Naive thymus-derived CD8-positive, alpha-beta T cell (primary cell): ENCODE measurements at regions of chr11 and their contacts with region 1.

Region 1: GRCh38 chr11:128624269-128625175 is 37.2 kb upstream of the ETS1 start:
- DNase-seq: peak; percentile 32 to 86 (median 61)
- ATAC-seq: peak; percentile 58 to 67
- H3K4me3 Mint-ChIP-seq: peak overlapping the region; percentile 52 to 85 (median 82)
- H3K27ac Mint-ChIP-seq: peak overlapping the region; percentile 93 to 99 (median 98)
- H3K4me1 Mint-ChIP-seq: peaks cover 66 to 99% (median 98%) of the 10 kb centered on the region in 4 donors
- H3K27me3 Mint-ChIP-seq: no peaks in the 10 kb centered on the region

Region 2: GRCh38 chr11:128472128-128473089 is 152.1 kb before region 1 on chr11:
- POLR2A ChIA-PET with region 1: interaction called, 45 read pairs
- DNase-seq: peak in 6 of 10 donors; percentile 26 to 56 (median 50)
- ATAC-seq: peak; percentile 2 to 33
- H3K4me3 Mint-ChIP-seq: peak overlapping the region; percentile 75 to 93 (median 88)
- H3K27ac Mint-ChIP-seq: peak overlapping the region; percentile 93 to 99 (median 98)
- H3K4me1 Mint-ChIP-seq: peaks cover 67 to 100% (median 96%) of the 10 kb centered on the region in 4 donors
- H3K27me3 Mint-ChIP-seq: no peaks in the 10 kb centered on the region

Region 3: DNA sequence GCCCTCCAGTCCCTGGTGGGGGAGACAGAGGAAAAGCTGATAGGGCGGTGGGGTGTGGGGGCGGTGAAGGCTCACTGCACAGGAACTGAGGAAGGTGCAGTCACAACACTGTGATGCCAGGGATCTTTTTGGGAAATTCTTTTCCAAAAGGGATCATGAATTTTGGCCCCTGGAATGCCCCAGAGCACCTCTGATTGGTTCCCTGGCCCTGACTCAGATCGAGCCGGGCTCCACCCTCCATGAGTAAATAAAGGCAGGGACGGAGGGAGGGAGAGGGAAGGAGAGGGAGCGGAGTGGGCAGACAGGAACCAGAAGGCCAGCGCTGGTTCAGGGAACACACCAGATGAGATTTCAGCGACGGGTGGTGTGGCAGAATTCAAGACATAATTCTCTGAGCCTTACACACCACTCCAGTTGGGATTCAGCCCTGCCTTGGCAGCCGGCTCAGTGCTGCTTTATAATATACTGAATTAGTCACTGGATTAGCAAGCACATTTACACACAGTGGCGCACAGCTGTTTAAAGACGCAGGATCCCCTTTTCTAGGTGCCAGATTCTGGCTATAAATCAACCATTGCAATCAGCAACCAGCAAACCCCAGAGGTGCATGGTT is 117.4 kb before region 1 on chr11:
- POLR2A ChIA-PET with region 1: interaction called, 69 read pairs
- DNase-seq: peak in 1 of 10 donors; percentile 64
- ATAC-seq: peak; percentile 5 to 11
- H3K4me3 Mint-ChIP-seq: peak overlapping the region; percentile 87 to 99 (median 98)
- H3K27ac Mint-ChIP-seq: peak overlapping the region; percentile 93 to 99 (median 96)
- H3K4me1 Mint-ChIP-seq: peaks cover 57 to 100% (median 96%) of the 10 kb centered on the region in 4 donors
- H3K27me3 Mint-ChIP-seq: no peaks in the 10 kb centered on the region

Region 4: DNA sequence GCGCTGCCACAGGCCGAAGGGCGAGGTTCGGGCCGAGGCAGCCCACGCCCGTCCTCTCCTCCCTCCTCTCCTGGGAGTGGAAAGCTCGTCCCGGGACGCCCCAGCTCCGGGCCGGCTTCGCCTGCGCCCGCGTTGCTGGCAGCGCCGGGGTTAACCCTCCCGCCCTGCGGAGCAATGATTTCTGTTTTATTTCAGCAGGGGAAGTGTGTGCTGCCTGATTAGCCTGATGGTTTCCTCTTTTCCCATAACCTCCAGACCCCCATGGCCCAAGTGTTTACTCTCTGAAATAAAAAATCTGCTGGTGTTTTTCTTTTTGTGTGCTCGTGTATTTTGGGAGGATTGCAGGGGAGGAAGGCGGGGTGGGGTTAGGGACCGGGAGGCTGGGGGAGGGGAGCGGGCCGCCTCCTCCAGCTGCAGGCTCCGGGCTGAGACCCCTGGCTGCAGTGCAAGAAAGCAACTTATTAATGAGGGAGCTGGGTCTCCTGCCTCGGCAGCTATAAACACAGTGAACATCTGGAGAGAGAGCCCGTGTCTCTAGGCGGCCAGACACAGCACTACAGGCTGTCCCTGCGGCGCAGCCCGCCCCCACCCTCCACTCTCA is 75.8 kb before region 1 on chr11:
- POLR2A ChIA-PET with region 1: interaction called, 53 read pairs
- DNase-seq: peak in 5 of 10 donors; percentile 14 to 49 (median 40)
- ATAC-seq: peak; percentile 26 to 32
- H3K4me3 Mint-ChIP-seq: peak overlapping the region; percentile 81 to 93 (median 88)
- H3K27ac Mint-ChIP-seq: peak overlapping the region; percentile 92 to 100 (median 95)
- H3K4me1 Mint-ChIP-seq: peaks cover 57 to 95% (median 92%) of the 10 kb centered on the region in 4 donors
- H3K27me3 Mint-ChIP-seq: no peaks in the 10 kb centered on the region

Region 5: DNA sequence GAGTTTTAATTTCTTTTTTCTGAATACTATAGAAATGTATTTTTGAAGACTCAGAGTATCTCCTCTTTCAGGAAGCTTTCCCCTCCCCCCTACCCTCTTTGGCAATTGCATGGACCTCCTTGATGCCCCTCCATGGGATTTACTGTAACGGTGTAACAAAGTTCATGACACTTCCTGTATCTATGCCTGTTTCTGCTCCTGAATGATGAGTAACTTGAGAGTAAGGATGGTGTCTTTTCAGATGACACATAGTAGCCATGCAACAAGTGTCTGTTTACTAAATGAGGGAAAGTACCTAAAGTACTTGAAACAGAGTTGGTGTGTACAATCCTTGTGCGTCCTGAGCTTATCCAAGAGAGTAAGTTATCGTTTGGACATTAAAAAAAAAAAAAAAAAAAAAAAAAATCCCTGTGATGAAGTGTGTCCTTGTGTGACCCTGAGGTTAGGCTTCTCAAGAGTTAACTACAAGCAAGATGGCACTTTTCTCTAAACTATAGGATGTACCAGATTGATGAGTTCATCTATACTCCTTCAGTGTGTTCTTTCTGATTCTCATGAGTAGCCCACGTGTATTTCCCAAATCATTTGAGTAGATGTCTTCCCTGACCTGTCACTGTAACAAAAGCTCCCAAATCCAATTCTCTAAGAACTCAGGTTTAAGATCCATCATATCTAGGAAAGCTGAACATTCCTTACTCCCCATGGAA is 44.6 kb before region 1 on chr11:
- POLR2A ChIA-PET with region 1: interaction called, 10 read pairs
- DNase-seq: no peak
- ATAC-seq: peak; percentile 40 to 61
- H3K4me3 Mint-ChIP-seq: peak overlapping the region in 3 of 10 donors; percentile 1 to 37 (median 5)
- H3K27ac Mint-ChIP-seq: peak overlapping the region in 4 of 10 donors; percentile 1 to 80 (median 5)
- H3K4me1 Mint-ChIP-seq: peaks cover 31 to 72% (median 68%) of the 10 kb centered on the region in 4 donors
- H3K27me3 Mint-ChIP-seq: no peaks in the 10 kb centered on the region

Region 6: GRCh38 chr11:128603752-128604414 is 20.6 kb before region 1 on chr11:
- POLR2A ChIA-PET with region 1: interaction called, 268 read pairs
- DNase-seq: no peak
- ATAC-seq: no peak
- H3K4me3 Mint-ChIP-seq: no peak overlapping the region
- H3K27ac Mint-ChIP-seq: peak overlapping the region in 6 of 10 donors; percentile 4 to 73 (median 46)
- H3K4me1 Mint-ChIP-seq: peaks cover 31 to 78% (median 66%) of the 10 kb centered on the region in 4 donors
- H3K27me3 Mint-ChIP-seq: no peaks in the 10 kb centered on the region